ENCODE measurements at regions of chr6 and their contacts with region 1.

Region 1: GRCh38 chr6:7589949-7590917 is at the start of gene SNRNP48:
- DNase-seq: peak; percentile 88
- ATAC-seq: peak; percentile 100
- H3K4me3 Mint-ChIP-seq: peak within 1 kb of the TSS; percentile 98
- H3K27ac Mint-ChIP-seq: peak within 1 kb of the TSS; percentile 84
- H3K4me1 Mint-ChIP-seq: peaks cover 31% of the 10 kb centered on the region
- H3K27me3 Mint-ChIP-seq: no peaks in the 10 kb centered on the region
- CTCF ChIP-seq: no peak
- total RNA-seq, gene SNRNP48: 15.4 and 18.7 TPM in 2 replicates

Region 2: DNA sequence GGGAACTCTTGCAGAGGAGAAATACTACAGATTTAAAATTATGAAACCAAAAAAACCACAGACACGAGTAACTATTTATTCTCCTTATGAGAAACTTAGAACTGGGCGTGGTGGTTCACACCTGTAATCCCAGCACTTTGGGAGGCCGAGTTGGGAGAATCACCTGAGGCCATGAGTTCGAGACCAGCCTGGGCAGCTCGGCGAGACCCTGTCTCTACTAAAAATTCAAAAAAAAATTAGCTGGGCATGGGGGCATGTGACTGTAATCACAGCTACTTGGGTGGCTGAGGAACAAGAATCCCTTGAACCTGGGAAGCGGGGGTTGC is 314.1 kb before region 1 on chr6:
- CTCF ChIA-PET with region 1: interaction called, 5 read pairs
- POLR2A ChIA-PET with region 1: interaction called, 11 read pairs
- intact Hi-C with region 1: loop called (anchors 1 kb)
- DNase-seq: no peak
- ATAC-seq: no peak
- H3K4me3 Mint-ChIP-seq: peak overlapping the region; percentile 53
- H3K27ac Mint-ChIP-seq: peak overlapping the region; percentile 67
- H3K4me1 Mint-ChIP-seq: peaks cover 36% of the 10 kb centered on the region
- H3K27me3 Mint-ChIP-seq: no peaks in the 10 kb centered on the region
- CTCF ChIP-seq: no peak

Region 3: GRCh38 chr6:7468382-7469081 is 121.7 kb before region 1 on chr6:
- CTCF ChIA-PET with region 1: no interaction called
- POLR2A ChIA-PET with region 1: no interaction called
- intact Hi-C with region 1: no loop called
- DNase-seq: no peak
- ATAC-seq: no peak
- H3K4me3 Mint-ChIP-seq: no peak overlapping the region
- H3K27ac Mint-ChIP-seq: no peak overlapping the region
- H3K4me1 Mint-ChIP-seq: no peaks in the 10 kb centered on the region
- H3K27me3 Mint-ChIP-seq: peaks cover 9% of the 10 kb centered on the region
- CTCF ChIP-seq: no peak

Region 4: DNA sequence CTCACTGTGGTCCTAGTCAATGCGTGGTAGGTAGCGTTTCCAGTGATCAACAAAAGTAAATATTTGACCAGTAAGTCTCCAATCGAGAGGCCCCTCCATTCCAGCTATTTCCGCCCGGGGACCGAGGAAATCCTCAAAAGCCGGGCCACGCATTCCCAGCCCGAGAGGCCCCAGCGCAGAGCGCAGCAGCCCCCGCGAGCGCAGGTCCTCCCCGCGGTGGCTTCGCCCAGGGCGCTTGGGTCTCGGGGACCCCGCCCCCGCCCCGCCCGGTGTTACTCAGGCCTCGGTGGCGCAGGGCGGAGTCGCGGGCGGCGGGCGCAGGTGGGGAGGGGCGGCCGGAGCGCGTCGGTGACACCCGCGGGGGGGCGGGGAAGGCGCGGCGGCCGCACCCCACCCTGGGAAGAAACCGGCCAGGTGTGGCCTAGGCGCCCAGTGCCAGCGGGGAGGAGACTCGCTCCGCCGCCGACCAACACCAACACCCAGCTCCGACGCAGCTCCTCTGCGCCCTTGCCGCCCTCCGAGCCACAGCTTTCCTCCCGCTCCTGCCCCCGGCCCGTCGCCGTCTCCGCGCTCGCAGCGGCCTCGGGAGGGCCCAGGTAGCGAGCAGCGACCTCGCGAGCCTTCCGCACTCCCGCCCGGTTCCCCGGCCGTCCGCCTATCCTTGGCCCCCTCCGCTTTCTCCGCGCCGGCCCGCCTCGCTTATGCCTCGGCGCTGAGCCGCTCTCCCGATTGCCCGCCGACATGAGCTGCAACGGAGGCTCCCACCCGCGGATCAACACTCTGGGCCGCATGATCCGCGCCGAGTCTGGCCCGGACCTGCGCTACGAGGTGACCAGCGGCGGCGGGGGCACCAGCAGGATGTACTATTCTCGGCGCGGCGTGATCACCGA is 48.8 kb before region 1 on chr6 and contains the start of gene DSP:
- CTCF ChIA-PET with region 1: no interaction called
- POLR2A ChIA-PET with region 1: no interaction called
- intact Hi-C with region 1: loop called (anchors 2 kb)
- DNase-seq: peak; percentile 35
- ATAC-seq: peak; percentile 76
- H3K4me3 Mint-ChIP-seq: peak within 1 kb of the TSS; percentile 81
- H3K27ac Mint-ChIP-seq: no peak within 1 kb of the TSS
- H3K4me1 Mint-ChIP-seq: peaks cover 13% of the 10 kb centered on the region
- H3K27me3 Mint-ChIP-seq: peaks cover 58% of the 10 kb centered on the region
- CTCF ChIP-seq: no peak
- total RNA-seq, gene DSP: 0.02 TPM in 2 replicates

Region 5: DNA sequence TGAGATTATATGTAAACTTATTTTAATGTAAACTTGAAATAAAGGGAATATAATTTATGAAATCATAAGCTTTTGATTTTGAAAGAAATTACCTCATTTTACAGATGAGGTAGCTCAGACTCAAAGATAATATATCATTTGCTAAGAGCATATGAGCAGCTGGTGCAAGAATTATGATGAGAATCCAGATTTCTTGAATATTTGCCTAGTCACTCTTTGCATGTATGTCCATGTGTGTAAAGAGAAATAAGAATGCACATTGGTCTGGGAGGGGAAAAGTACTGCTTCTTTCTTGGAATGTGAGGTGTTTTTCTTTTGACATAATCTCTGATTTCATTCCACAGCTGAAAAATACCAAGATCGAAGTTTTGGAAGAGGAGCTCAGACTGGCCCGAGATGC is 11.3 kb before region 1 on chr6:
- CTCF ChIA-PET with region 1: no interaction called
- POLR2A ChIA-PET with region 1: no interaction called
- intact Hi-C with region 1: no loop called
- DNase-seq: no peak
- ATAC-seq: no peak
- H3K4me3 Mint-ChIP-seq: no peak overlapping the region
- H3K27ac Mint-ChIP-seq: no peak overlapping the region
- H3K4me1 Mint-ChIP-seq: no peaks in the 10 kb centered on the region
- H3K27me3 Mint-ChIP-seq: peaks cover 16% of the 10 kb centered on the region
- CTCF ChIP-seq: no peak

Region 6: GRCh38 chr6:7707787-7708186 is 117.6 kb after region 1 on chr6:
- CTCF ChIA-PET with region 1: no interaction called
- POLR2A ChIA-PET with region 1: no interaction called
- intact Hi-C with region 1: no loop called
- DNase-seq: no peak
- ATAC-seq: no peak
- H3K4me3 Mint-ChIP-seq: no peak overlapping the region
- H3K27ac Mint-ChIP-seq: no peak overlapping the region
- H3K4me1 Mint-ChIP-seq: no peaks in the 10 kb centered on the region
- H3K27me3 Mint-ChIP-seq: peaks cover 16% of the 10 kb centered on the region
- CTCF ChIP-seq: no peak

Region 7: GRCh38 chr6:8102122-8102958 is 512.1 kb after region 1 on chr6 and contains the start of gene EEF1E1:
- CTCF ChIA-PET with region 1: no interaction called
- POLR2A ChIA-PET with region 1: no interaction called
- intact Hi-C with region 1: loop called (anchors 5 kb)
- DNase-seq: peak; percentile 80
- ATAC-seq: peak; percentile 98
- H3K4me3 Mint-ChIP-seq: peak within 1 kb of the TSS; percentile 97
- H3K27ac Mint-ChIP-seq: peak within 1 kb of the TSS; percentile 93
- H3K4me1 Mint-ChIP-seq: peaks cover 25% of the 10 kb centered on the region
- H3K27me3 Mint-ChIP-seq: peaks cover 14% of the 10 kb centered on the region
- CTCF ChIP-seq: no peak
- total RNA-seq, gene EEF1E1: 32.5 and 33.0 TPM in 2 replicates

Region 8: DNA sequence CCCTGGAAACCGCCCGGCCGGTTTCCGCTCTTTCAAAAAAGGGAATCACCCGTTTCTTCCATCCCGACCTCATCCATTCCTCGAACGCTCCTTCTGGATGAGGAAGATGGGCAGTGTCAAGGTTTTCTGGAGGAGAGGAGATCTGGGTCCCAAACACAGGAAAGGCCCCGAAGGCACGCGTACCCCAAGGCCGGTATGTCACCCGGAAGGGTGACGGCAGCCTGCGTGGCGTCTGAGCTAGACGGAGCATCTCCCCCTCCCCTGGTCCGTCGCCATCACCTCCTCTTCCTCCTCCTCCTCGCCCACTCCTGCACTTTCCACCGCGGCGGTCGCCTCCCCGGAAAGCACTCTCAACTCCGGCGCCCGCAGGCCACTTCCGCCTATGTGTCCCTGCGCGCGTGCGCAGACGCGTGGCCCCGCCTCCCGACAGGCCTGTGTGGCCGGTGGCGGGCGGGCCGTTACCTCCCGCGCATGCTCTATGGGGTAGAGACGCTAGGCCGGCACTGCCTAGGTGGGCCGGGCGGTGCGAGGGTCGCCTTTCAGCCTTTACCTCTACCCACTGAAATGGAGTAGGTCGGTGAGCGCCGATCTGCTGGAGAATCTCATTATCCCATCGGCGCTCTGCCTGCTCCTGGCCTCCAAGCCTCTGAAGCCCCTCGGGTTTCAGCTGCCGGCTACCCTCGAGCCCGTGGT is 845.1 kb after region 1 on chr6 and contains the start of gene SLC35B3:
- CTCF ChIA-PET with region 1: no interaction called
- POLR2A ChIA-PET with region 1: no interaction called
- intact Hi-C with region 1: loop called (anchors 2 kb)
- DNase-seq: peak; percentile 99
- ATAC-seq: peak; percentile 95
- H3K4me3 Mint-ChIP-seq: peak within 1 kb of the TSS; percentile 95
- H3K27ac Mint-ChIP-seq: peak within 1 kb of the TSS; percentile 95
- H3K4me1 Mint-ChIP-seq: peaks cover 42% of the 10 kb centered on the region
- H3K27me3 Mint-ChIP-seq: no peaks in the 10 kb centered on the region
- CTCF ChIP-seq: no peak
- total RNA-seq, gene SLC35B3: 12.9 and 13.3 TPM in 2 replicates

Measured in activated B cell treated with CpG ODN at 0.5 μM for 24 hours (primary cell).